Posterior vena cava (tissue), 2 donors: ENCODE measurements at regions of chr16 and their contacts with region 1.

Region 1: GRCh38 chr16:75566040-75566810 is at the start of gene GABARAPL2:
- DNase-seq: peak; percentile 96
- total RNA-seq, gene GABARAPL2: 94.3 to 96.0 TPM

Region 2: GRCh38 chr16:75534560-75535205 is 31.5 kb before region 1 on chr16:
- intact Hi-C with region 1: no loop called
- DNase-seq: peak; percentile 68

Region 3: DNA sequence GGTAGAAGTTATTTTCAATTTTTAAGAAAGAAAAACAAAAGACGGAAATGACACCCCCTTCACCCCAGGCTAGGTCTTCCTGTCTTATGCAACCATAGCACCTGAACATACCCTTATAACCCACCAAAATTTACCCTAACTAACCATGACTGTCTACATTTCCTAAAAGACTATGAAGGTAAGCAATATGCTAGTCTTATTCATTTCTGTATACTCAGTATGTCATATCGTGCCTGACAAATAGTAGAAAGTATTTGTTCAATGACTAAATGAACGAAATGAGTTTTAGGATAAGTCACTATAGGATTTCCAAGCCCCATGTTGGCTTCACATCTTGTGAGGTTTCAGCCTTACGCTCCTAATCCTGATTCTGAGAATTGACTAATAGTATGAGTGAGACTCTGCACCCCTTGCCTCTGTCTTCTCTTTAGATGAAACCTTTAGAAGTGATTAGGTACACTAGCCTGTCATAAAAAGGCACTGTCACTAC is 50.3 kb after region 1 on chr16:
- intact Hi-C with region 1: loop called (anchors 5 to 10 kb)
- DNase-seq: no peak

Region 4: GRCh38 chr16:75622761-75623605 is 56.8 kb after region 1 on chr16 and contains the start of gene ADAT1:
- intact Hi-C with region 1: loop called (anchors 5 to 10 kb)
- DNase-seq: peak; percentile 100
- total RNA-seq, gene ADAT1: 26.0 to 29.1 TPM